ENCODE measurements at regions of chr12 and their contacts with region 1.

Region 1: DNA sequence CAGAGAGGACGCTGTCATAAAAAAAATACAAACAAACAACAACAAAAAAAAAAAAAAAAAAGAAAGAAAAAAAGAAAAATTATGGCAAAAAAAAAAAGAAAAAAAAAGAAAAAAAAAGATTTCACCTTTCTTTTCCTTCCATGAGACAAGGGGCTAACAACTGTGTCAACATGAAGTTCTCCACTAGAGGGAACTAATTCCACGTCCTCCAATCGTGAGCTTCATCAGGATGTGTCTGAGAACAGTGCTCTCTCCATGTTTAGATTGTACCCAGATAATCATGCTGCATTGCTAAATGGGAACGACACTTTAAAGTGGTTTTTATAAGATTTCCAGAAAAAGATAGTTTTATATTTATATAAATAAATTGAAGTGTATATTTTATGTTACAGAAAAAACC is 96.2 kb upstream of the PTPRB start:
- DNase-seq: peak; percentile 65

Region 2: DNA sequence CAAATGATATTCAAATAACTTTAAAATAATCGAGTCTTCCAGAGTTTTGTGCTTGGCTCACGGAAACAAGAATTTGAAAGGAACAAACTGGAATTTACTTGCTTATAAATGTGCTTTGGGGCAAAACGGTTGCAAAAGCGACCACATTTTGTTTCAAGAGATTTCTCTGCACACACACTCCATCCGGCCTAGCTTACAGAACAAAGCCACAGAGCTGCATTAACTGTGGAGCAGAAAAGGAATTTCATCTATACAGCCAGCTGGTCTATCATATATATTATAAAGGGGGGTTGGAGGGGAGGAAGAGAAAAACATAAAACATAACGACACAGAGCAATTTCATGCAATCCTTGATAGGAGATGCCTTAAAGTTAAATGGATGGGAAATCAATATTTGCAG is 755.4 kb before region 1 on chr12:
- in situ Hi-C with region 1: no loop called
- DNase-seq: no peak

Region 3: DNA sequence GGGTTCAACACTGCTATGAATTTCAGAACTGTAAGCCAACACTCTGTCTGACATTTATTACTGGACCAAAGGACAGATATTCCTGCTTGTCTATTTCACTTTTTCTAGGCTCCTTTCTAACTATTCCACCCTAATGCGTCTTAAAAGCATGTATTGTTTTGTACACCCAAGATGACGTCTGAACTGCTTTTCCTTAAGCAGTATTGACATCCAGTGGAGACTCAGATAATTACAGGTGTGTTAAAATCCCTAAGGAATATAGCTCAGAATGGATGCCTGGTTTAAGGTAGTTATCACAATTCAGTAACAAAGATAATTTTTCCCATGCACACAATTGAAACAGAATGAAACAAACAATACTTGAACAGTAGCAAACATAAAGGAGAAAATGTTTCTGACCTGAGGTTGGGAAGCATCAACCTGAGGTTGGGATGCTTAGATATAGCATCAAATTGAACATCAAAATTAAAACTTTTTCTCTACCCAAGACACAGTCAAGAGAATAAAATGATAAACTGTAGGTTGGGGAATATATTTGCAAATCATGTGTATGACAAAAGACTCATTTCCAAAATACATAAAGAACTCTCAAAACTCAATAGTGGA is 280.9 kb after region 1 on chr12:
- in situ Hi-C with region 1: loop called (anchors 25 kb)
- DNase-seq: peak; percentile 11

Region 4: GRCh38 chr12:71045781-71046180 is 312.4 kb after region 1 on chr12:
- in situ Hi-C with region 1: no loop called
- DNase-seq: no peak

Measured in KBM-7 (cell line).